ENCODE measurements at regions of chr1 and their contacts with region 1.

Region 1: DNA sequence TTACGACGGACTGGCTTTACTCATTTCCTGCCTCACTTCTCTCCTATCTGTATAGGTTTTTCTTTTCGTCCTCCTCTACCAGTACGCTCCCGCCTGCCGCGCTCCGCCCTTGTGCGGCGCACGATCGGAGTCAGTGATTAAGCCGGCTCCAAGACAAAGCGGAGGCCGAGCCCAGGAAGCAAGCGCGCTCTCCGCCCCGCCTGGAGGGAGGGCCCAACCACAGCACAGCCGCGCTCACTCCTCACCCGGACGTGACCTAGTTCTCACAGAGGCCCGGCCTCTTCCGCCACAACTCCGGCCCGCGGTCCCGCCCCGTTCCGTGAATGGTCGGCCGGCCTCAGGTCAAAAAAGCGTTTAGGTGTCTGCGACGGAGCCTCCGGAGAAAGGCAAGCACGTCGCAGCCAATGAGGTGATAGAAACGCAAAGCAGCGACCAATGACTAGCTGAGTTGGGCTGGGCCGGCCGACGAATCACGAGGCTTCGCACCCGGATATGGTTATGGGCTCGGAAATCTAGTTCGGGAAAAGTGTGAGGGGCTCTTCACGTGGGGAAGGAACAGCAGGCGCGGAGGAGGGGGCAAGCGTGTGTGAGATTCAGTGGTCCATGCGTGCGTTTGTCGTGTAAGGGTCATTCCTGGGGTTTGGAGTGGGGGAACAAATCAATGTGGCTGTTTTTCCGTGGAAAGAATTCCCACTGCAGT is at the start of gene METTL13:
- DNase-seq: peak; percentile 99
- H3K4me3 ChIP-seq: peak within 1 kb of the TSS; percentile 71 to 73
- H3K27ac ChIP-seq: peak within 1 kb of the TSS; percentile 80 to 86
- H3K4me1 ChIP-seq: peaks cover 14% of the 10 kb centered on the region
- H3K27me3 ChIP-seq: no peaks in the 10 kb centered on the region
- CTCF ChIP-seq: no peak
- POLR2A ChIP-seq: peak; percentile 98
- total RNA-seq, gene METTL13: 25.5 to 49.8 TPM

Region 2: GRCh38 chr1:171485375-171486047 is 295.8 kb before region 1 on chr1 and contains the start of gene PRRC2C:
- intact Hi-C with region 1: loop called (anchors 5 kb)
- DNase-seq: peak; percentile 98
- H3K4me3 ChIP-seq: peak within 1 kb of the TSS; percentile 82 to 85
- H3K27ac ChIP-seq: peak within 1 kb of the TSS; percentile 98
- H3K4me1 ChIP-seq: no peaks in the 10 kb centered on the region
- H3K27me3 ChIP-seq: no peaks in the 10 kb centered on the region
- CTCF ChIP-seq: peak; percentile 71 to 95 (median 86)
- POLR2A ChIP-seq: peak; percentile 80
- total RNA-seq, gene PRRC2C: 70.1 to 115 TPM

Region 3: DNA sequence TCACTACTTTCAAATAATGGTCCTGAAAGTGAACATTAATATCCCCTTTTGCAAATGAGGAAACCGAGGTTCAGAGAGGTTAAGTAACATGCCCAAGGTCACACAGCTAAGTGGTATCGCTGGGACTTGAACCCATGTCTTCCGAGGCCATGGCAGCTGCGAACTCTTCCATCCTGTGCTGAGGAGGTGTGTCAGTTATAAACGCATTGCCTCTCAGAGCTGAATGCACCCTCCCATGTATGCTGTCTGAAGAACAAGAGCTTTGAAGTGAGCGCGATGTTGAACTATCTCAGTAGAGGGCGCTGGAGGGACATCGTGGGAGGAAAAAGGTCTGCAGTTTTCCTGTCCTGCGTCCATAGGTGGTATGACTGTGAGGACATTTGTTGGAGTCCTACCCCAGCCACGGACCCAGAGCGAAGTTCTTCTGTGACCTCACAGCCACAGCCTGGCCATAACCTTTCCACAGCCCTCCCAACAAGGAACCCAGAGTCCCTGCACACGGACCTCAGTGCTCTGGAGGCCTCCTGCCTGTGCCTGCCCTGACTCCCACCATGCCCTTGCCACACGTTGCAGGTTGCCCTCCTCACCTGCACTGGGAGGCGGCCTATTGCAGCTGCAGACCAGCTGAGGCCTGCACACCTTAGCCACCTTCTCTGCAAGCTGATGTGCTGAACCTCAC is 136.4 kb before region 1 on chr1:
- intact Hi-C with region 1: loop called (anchors 2 kb)
- DNase-seq: peak; percentile 84
- H3K4me3 ChIP-seq: no peak overlapping the region
- H3K27ac ChIP-seq: peak overlapping the region; percentile 78 to 80
- H3K4me1 ChIP-seq: peaks cover 13% of the 10 kb centered on the region
- H3K27me3 ChIP-seq: no peaks in the 10 kb centered on the region
- CTCF ChIP-seq: peak; percentile 53 to 85 (median 76)
- POLR2A ChIP-seq: no peak

Region 4: DNA sequence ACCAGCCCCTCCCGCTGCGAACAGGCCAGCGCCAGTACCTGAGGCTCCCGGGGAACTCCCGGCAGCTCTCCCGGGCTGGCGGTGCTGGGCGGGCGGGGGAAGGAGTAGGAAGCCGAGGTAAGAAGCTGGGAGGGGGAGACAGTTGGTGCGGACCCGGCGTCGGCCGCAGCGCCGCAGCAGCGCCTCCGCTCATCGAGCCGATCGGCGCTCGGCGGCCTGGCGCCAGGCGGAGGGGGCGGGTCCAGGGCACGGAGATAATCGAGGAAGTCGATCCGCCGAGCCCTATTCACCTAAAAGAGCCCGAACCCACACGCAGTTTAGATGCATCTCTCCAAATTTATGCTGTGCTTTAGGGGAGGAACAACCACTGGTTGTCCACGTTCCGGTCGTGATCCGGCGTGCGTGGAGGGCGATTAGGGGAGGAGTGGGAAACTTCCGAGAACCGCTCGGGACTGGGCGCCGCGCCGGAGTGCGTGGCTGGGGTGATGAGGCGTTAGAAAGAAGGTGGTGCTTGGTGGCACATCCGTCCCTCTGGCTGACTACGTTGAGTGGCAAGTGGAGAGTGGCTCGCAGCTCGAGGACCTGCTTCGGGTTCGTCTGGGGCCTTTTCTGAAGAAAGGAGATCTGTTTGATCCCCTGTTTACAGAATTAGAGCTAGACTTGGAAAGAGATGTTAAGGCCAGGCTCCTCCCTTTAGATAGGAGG is 39.3 kb before region 1 on chr1 and contains the start of gene VAMP4:
- intact Hi-C with region 1: loop called (anchors 2 kb)
- DNase-seq: peak; percentile 86
- H3K4me3 ChIP-seq: peak within 1 kb of the TSS; percentile 82 to 91
- H3K27ac ChIP-seq: peak within 1 kb of the TSS; percentile 95 to 96
- H3K4me1 ChIP-seq: no peaks in the 10 kb centered on the region
- H3K27me3 ChIP-seq: no peaks in the 10 kb centered on the region
- CTCF ChIP-seq: peak in 1 of 4 experiments; percentile 23
- POLR2A ChIP-seq: peak; percentile 91
- total RNA-seq, gene VAMP4: 8.2 to 17.2 TPM

Measured in prostate gland (tissue), 2 donors.